Heart right ventricle (tissue), 16 donors: ENCODE measurements at regions of chr4 and their contacts with region 1.

Region 1: DNA sequence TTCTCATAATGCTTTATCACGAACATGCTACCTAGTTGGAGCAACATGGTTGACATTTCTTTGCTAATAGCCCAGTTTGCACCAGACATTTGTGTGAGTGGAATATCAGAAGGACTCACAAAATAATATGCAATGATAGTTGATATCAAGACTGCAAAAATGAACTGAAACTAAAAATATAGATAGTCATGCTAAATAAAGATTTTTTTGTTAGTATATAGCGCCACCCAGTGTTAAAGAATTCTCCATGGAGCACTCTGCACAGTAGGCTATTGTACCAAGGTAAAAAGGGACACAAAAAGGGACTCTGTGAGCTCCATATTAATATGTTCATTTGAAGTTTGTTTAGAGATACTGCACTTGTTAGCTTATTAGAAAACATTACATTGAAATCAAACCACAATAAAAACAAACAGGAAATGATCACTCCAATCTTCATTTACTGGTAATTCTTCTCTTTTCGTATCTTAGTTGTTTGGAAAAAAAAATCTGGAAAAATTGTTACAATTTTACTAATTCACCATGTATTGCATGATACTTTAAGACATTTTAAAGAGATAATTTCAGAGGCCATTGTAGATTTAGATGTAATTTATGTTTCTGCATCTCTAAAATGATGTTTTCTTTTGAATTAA is 1509.6 kb downstream of the ADGRL3 start:
- DNase-seq: no peak
- ATAC-seq: peak in 5 of 8 donors; percentile 29 to 59 (median 50)
- H3K4me3 ChIP-seq: peak overlapping the region in 6 of 10 donors; percentile 23 to 46 (median 36)
- H3K27ac ChIP-seq: no peak overlapping the region
- H3K4me1 ChIP-seq: no peaks in the 10 kb centered on the region
- H3K27me3 ChIP-seq: no peaks in the 10 kb centered on the region
- CTCF ChIP-seq: peak; percentile 26 to 71 (median 59)

Region 2: DNA sequence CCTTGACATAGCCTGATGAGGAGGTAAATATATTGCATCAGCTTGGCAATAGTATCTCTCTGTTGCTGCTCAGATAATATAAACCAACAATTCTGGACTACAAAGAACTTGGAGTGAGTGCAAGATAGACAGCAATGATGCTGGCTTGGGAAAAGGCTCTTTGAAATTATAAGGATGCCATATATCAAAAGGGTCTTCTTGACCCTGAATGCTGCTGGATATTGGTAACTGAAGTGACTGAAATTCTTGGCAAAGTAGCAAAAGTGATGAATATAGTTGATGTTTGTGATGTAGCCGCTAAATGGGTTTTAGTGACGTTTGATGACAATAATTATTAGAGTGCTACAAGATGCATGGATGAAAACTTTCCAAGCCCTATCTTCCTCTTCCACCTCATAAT is 118.0 kb before region 1 on chr4:
- intact Hi-C with region 1: loop called in 5 of 10 experiments (anchors 5 to 10 kb)
- DNase-seq: no peak
- ATAC-seq: no peak
- H3K4me3 ChIP-seq: no peak overlapping the region
- H3K27ac ChIP-seq: no peak overlapping the region
- H3K4me1 ChIP-seq: peaks cover 0 to 11% (median 0%) of the 10 kb centered on the region in 9 donors
- H3K27me3 ChIP-seq: no peaks in the 10 kb centered on the region
- CTCF ChIP-seq: no peak

Region 3: GRCh38 chr4:62601737-62602136 is 108.0 kb before region 1 on chr4:
- intact Hi-C with region 1: loop called in 4 of 10 experiments (anchors 5 to 10 kb)
- DNase-seq: no peak
- ATAC-seq: no peak
- H3K4me3 ChIP-seq: no peak overlapping the region
- H3K27ac ChIP-seq: no peak overlapping the region
- H3K4me1 ChIP-seq: no peaks in the 10 kb centered on the region
- H3K27me3 ChIP-seq: no peaks in the 10 kb centered on the region
- CTCF ChIP-seq: no peak

Region 4: GRCh38 chr4:62835631-62836030 is 125.9 kb after region 1 on chr4:
- intact Hi-C with region 1: no loop called
- DNase-seq: no peak
- ATAC-seq: no peak
- H3K4me3 ChIP-seq: no peak overlapping the region
- H3K27ac ChIP-seq: no peak overlapping the region
- H3K4me1 ChIP-seq: no peaks in the 10 kb centered on the region
- H3K27me3 ChIP-seq: no peaks in the 10 kb centered on the region
- CTCF ChIP-seq: no peak